Activated T-helper 2 cell treated with anti-CD3 and anti-CD28 coated beads, Interferon-gamma antibody, Interleukin-2, Interleukin-4, amounts not matched to agents 10 μg/mL and 5 μg/mL and 100 μg/mL, durations not matched to agents 14 hours and 24 hours and 36 hours (primary cell): ENCODE measurements at regions of chr6 and their contacts with region 1.

Region 1: DNA sequence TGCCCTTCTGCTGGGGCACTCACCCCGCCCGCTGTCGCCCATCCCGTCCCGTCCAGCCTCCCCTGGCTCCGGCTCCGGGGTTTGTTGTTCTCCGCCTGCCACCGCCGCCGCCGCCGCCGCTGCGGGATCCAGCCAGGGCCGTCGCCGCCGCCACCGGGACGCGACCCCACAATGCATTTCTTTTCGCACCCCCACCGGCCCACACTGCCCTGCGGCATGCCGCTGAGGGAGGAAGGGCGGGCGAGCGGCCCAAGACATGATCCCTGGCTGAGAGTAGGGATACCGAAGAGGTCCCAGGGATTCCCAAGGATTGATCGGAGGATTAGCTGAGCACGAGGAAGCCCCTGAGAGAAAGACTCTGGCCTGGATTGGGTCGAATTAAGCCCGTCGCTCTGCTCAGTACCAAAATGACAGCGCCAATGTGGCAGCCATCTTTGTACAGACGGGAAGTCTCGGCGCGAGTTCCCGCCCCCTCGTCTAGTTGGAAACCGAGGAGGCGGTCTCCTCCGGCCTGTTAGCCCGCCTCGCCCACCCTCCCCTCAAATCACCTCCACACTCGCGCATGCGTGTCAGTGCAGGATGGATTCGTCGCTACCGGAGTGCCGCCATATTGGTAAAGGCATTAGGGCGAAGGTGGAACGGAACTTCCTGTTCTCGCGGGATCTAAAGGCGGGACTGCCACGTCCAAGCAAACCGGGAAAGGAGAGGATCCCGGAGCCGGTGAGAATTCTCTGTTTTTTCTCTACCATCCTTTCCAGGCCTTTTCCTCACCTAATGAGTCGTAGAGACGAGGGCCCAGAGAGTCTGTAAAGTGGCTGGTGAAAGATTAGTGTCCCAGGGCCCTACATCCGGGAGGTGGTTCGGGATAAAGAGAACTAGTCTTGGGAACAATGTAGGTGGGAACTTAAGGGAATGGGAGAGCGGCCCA is at the starts of genes RXRB and SLC39A7:
- DNase-seq: peak; percentile 97
- H3K4me3 Mint-ChIP-seq: peak within 1 kb of the TSS; percentile 100
- H3K27ac Mint-ChIP-seq: peak within 1 kb of the TSS; percentile 98
- H3K4me1 Mint-ChIP-seq: peaks cover 50% of the 10 kb centered on the region
- H3K27me3 Mint-ChIP-seq: no peaks in the 10 kb centered on the region
- total RNA-seq, gene RXRB: 47.8 and 50.0 TPM in 2 replicates
- total RNA-seq, gene SLC39A7: 63.8 and 69.6 TPM in 2 replicates

Region 2: DNA sequence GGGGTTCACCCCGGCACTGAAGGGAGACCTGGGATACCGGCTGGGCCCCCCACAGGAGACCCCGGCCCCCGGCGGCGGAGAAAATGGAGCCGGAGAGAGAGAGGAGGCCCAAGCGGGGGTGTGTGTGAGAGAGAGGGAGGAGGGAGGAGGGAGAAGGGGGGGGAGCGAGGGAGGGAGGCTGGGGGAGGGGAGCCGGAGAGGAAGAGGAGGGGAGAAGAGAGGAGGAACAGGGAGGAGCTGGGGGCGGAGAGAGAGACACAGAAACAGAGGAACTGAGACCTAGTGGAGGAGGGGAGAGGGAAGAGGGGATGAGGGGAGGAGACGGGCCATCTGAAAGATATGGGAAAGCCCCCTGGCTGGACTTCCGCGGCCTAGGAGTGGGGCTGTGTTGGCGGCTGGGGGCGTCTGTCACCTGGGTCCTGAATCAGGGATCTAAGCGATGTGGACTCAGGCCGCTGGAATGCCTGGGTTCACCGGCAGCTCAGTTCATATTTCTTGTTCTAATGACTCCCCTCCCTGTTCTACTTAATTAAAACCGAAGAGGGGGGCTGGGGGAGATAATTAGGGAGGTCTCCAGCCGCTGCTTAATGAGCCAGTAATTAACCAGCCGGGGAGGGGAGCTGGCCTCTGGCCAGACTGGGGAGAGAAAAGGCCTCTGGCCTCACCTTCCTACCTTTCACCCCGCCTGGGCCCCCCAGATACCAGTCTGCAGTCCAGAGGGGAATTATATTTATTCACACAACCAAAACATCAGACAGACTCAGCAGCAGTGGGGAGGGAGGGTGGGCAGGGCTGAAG is 1010.2 kb before region 1 on chr6 and contains the start of gene PBX2:
- intact Hi-C with region 1: loop called (anchors 5 kb)
- DNase-seq: peak; percentile 79
- H3K4me3 Mint-ChIP-seq: peak within 1 kb of the TSS; percentile 97
- H3K27ac Mint-ChIP-seq: peak within 1 kb of the TSS; percentile 95
- H3K4me1 Mint-ChIP-seq: peaks cover 55% of the 10 kb centered on the region
- H3K27me3 Mint-ChIP-seq: no peaks in the 10 kb centered on the region
- total RNA-seq, gene PBX2: 80.8 and 85.2 TPM in 2 replicates

Region 3: DNA sequence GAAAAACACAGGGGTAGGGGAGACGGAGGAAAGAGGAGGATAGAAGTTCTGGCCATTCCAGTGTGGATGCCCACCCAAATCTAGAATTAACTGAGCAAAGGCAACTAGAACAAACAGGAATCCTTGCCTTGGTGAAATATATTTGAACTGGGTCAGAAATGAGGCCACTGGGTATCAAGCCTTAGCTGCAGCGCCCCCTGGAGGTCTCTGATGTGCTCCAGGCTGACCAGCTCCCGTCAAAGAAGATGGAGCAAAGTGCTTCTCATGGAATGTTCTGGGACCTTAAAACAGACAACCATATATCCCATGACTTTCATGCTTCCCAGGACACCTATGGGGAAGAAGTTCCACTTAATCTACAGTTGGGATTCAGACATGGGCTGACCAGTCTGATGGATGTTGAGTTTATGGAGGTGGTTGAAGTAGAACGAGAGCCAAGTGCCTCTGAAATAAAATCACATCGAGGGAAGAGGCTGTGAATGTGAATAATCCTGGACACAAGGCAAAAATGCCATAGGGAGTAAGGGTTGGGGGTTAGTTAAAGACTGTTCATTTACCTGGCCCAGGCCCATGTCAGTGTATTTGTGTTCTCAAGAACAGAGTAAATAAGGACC is 74.3 kb before region 1 on chr6:
- intact Hi-C with region 1: loop called (anchors 2 kb)
- DNase-seq: peak; percentile 32
- H3K4me3 Mint-ChIP-seq: no peak overlapping the region
- H3K27ac Mint-ChIP-seq: no peak overlapping the region
- H3K4me1 Mint-ChIP-seq: peaks cover 26% of the 10 kb centered on the region
- H3K27me3 Mint-ChIP-seq: peaks cover 6% of the 10 kb centered on the region

Region 4: DNA sequence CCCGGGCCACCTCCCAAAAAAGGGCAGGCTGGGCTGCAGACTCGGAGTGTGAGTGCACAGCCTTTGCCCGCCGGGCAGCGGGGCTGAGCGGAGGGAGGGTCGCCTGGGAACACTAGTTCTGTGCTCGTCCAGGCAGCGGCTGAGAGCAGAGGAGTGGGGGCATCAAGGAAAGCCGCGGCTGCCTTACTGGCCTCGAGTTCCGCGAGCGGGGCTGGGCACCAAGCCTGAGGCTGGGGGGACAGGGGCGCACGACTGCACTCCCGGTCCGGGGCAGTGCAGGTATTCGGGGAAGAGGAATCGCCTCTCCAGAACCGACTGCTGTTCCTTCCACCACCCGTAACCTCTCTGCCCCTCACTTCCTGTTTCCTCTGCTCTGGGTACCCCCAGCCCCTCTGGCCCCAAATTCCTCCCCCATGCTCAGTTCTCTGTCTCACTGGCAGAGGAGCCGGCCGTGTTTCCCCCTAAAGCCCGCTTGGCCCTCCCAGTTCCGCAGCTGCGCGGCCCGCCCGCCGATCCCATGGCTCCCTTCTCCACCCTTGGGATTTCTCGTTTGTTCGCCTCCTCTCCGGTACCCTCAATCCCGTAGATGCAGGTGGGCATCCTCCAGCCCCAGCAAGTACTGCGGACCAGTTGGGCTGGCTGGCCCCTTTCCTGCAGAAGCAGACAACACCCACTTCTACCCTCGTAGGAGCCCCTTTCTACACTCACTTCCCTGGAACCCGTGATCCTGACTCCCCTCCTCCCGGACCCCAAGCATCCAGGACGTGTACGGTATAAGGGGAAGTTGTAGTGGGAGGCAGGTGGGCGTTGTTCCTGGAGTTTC is 12.9 kb after region 1 on chr6:
- intact Hi-C with region 1: no loop called
- DNase-seq: no peak
- H3K4me3 Mint-ChIP-seq: peak overlapping the region; percentile 34
- H3K27ac Mint-ChIP-seq: no peak overlapping the region
- H3K4me1 Mint-ChIP-seq: peaks cover 26% of the 10 kb centered on the region
- H3K27me3 Mint-ChIP-seq: peaks cover 35% of the 10 kb centered on the region

Region 5: GRCh38 chr6:33248925-33249731 is 48.6 kb after region 1 on chr6:
- intact Hi-C with region 1: loop called (anchors 1 kb)
- DNase-seq: peak; percentile 97
- H3K4me3 Mint-ChIP-seq: peak overlapping the region; percentile 88
- H3K27ac Mint-ChIP-seq: peak overlapping the region; percentile 92
- H3K4me1 Mint-ChIP-seq: peaks cover 32% of the 10 kb centered on the region
- H3K27me3 Mint-ChIP-seq: no peaks in the 10 kb centered on the region

Region 6: DNA sequence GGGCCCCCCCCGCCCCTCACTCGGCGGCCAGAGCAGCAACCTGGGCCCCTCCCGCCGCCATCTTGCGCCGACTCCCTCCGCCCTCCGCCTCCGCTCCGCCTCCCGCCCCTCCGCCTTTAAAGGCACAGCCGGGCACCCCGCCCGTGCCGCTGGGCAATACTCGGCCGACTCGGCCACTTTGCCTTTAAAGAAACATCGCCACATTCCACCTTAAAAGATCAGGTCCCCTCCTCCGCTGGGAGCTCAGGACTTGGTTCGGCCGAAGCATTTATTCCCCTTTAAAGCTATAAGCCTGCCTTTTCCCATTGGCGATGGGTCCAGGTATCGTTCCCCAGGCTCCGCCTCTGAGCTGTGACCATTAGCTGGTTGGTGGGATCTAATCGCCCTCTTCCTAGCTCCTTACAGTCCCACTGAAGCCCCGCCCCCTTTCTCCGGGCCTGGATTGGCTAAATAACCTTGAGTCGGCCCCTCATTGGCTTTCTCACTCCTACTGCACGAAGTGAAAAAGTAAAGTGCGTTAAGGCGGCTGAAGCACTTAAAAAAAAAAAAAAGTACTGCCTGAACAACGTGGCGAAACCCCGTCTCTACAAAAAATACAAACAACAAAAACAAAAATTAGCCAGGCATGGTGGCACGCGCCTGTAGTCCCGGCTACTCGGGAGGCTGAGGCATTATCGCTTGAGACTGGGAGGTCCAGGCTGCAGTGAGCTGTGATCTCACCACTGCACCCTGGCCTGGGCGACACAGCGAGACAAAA is 117.4 kb after region 1 on chr6 and contains the start of gene ZBTB22:
- intact Hi-C with region 1: loop called (anchors 1 kb)
- DNase-seq: peak; percentile 95
- H3K4me3 Mint-ChIP-seq: peak within 1 kb of the TSS; percentile 99
- H3K27ac Mint-ChIP-seq: peak within 1 kb of the TSS; percentile 97
- H3K4me1 Mint-ChIP-seq: peaks cover 52% of the 10 kb centered on the region
- H3K27me3 Mint-ChIP-seq: no peaks in the 10 kb centered on the region
- total RNA-seq, gene ZBTB22: 10.9 and 14.4 TPM in 2 replicates

Region 7: DNA sequence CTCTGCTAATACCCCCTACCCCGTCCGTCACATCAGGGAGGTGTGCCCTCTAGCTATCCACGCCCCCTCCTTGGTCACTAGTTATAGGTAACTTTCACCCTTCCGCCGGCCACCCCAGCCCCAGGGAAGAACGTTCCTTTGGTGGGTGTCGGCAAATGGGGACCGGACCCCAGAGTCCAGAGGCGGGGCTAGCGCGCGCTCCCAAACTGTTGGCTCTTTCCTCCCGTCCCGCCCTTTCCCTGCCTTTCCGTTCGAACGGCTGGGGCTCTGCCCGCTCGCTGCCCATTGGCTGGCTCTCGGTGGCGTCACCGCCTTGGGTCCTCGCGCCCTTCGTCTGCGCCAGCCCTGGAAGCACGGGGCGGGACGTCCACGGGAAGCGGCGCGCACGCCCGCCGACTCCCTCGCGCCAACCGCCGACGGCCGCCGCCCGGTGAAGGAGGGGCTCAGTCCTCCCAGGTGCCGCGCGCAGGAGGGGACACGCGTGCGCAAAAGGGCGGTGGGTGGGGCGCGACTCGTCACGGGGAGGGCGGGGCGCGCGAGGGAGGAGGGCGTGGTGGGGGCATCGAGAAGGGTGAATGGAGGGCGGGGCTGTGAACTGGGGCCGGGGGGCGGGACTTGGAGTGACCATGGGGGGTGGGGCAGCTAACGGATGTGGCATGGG is 209.7 kb after region 1 on chr6:
- intact Hi-C with region 1: loop called (anchors 2 kb)
- DNase-seq: peak; percentile 98
- H3K4me3 Mint-ChIP-seq: peak overlapping the region; percentile 88
- H3K27ac Mint-ChIP-seq: peak overlapping the region; percentile 93
- H3K4me1 Mint-ChIP-seq: peaks cover 38% of the 10 kb centered on the region
- H3K27me3 Mint-ChIP-seq: no peaks in the 10 kb centered on the region